ENCODE measurements at regions of chr10 and their contacts with region 1.

Region 1: GRCh38 chr10:28532383-28533175 is at the start of gene WAC:
- DNase-seq: peak; percentile 97 to 99 (median 97)
- ATAC-seq: peak; percentile 95 to 97 (median 96)
- H3K4me3 ChIP-seq: peak within 1 kb of the TSS; percentile 78 to 99 (median 95)
- H3K27ac ChIP-seq: peak within 1 kb of the TSS; percentile 96 to 100 (median 100)
- H3K4me1 ChIP-seq: peaks cover 0 to 56% (median 29%) of the 10 kb centered on the region in 12 donors
- H3K27me3 ChIP-seq: no peaks in the 10 kb centered on the region
- CTCF ChIP-seq: peak in 4 of 12 donors; percentile 13 to 41 (median 26)
- POLR2A ChIP-seq: peak in 1 of 2 donors; percentile 80
- total RNA-seq, gene WAC: 83.6 to 124 (median 104) TPM

Region 2: DNA sequence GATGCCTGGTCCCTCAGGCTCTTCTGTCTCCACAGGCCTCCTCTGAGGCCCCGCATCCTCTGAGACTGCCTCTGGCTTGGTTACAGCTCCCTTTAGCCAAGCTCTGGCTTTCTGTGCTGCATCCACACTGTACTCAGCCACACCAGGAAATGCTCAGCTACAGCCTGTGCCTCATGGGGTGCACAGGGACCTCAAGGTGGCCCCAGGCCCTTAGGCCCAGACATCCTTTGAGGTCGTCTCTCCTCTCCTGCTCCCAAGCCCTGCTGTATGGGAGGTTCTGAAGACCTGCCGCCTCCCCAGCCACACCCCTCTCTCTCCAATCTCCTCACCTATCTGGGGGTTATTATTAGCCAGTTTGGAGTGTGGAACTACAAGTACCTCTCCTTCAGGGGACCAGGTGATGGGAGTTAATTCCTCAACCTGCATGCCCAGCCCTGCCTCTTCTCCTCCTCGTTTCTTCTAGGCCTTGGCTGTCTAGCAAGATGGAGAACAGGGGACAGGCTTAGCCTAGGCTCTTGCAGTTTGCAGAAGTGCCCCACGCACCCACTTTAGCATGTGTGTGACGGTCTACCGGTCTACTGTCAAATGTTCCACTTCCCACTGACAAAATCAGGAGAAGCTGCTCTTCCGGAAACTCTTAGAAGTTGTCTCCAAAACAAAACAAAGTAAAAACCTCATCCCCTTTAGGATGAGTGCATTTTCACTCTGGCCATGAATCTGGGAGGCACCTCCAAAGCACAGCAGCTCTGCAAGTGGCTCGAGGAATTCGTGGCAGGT is 63.7 kb before region 1 on chr10:
- intact Hi-C with region 1: loop called in 1 of 10 experiments (anchors 5 kb)
- DNase-seq: peak in 1 of 5 donors; percentile 11
- ATAC-seq: peak in 1 of 4 donors; percentile 21
- H3K4me3 ChIP-seq: no peak overlapping the region
- H3K27ac ChIP-seq: no peak overlapping the region
- H3K4me1 ChIP-seq: no peaks in the 10 kb centered on the region
- H3K27me3 ChIP-seq: no peaks in the 10 kb centered on the region
- CTCF ChIP-seq: no peak
- POLR2A ChIP-seq: no peak

Region 3: DNA sequence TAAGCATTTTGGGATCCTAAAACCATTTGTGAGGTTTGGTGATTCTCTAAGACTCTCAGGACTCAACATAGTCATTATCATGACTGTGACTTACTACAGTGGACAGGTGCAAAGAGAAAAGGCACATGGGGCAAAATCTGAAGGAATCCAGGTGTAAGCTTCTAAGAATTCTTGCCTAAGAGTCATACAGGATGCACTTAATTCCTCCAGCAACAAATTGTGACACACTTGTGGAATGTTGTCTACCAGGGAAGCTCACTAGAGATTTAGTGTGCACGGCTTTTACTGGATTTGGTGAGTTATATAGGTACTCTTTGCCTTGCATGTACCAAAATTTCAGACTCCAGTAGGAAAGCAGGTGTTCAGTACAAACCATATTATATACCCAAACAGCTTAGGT is 48.2 kb after region 1 on chr10:
- intact Hi-C with region 1: loop called in 4 of 10 experiments (anchors 5 kb)
- DNase-seq: no peak
- ATAC-seq: no peak
- H3K4me3 ChIP-seq: no peak overlapping the region
- H3K27ac ChIP-seq: no peak overlapping the region
- H3K4me1 ChIP-seq: peaks cover 0 to 85% (median 47%) of the 10 kb centered on the region in 12 donors
- H3K27me3 ChIP-seq: no peaks in the 10 kb centered on the region
- CTCF ChIP-seq: no peak
- POLR2A ChIP-seq: no peak

Measured in heart left ventricle (tissue), 16 donors.